ENCODE measurements at regions of chr4 and their contacts with region 1.

Region 1: GRCh38 chr4:80313627-80314026 is 21.9 kb upstream of the CFAP299 start:
- DNase-seq: no peak
- ATAC-seq: no peak
- H3K4me3 ChIP-seq: no peak overlapping the region
- H3K27ac ChIP-seq: no peak overlapping the region
- H3K4me1 ChIP-seq: no peaks in the 10 kb centered on the region
- H3K27me3 ChIP-seq: peaks cover 0 to 13% (median 0%) of the 10 kb centered on the region in 7 donors
- CTCF ChIP-seq: no peak

Region 2: GRCh38 chr4:79513576-79513975 is 800.1 kb before region 1 on chr4:
- intact Hi-C with region 1: no loop called
- DNase-seq: no peak
- ATAC-seq: no peak
- H3K4me3 ChIP-seq: no peak overlapping the region
- H3K27ac ChIP-seq: no peak overlapping the region
- H3K4me1 ChIP-seq: peaks cover 0 to 13% (median 4%) of the 10 kb centered on the region in 9 donors
- H3K27me3 ChIP-seq: no peaks in the 10 kb centered on the region
- CTCF ChIP-seq: no peak

Region 3: DNA sequence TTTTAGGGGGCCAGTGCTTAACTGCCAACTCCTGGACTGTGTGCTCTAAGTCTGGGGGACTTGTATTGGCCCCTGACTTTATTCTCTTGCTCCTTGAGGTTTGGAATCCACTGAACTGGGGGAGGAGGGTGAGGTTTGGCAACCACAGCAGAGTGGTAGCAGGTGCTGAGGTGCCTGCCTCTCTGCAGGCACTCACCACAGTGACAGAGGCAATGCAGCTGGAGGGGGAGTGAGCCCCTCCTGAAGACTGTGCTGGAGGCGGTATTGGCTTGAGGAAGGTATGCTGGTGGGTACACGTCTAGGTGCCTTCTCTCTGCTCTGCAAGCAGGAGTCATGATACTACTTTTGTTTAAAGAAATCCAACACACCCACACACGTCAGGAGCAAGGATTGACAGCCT is 46.5 kb after region 1 on chr4:
- intact Hi-C with region 1: loop called in 1 of 10 experiments (anchors 1 kb)
- DNase-seq: no peak
- ATAC-seq: no peak
- H3K4me3 ChIP-seq: no peak overlapping the region
- H3K27ac ChIP-seq: no peak overlapping the region
- H3K4me1 ChIP-seq: no peaks in the 10 kb centered on the region
- H3K27me3 ChIP-seq: peaks cover 0 to 31% (median 13%) of the 10 kb centered on the region in 7 donors
- CTCF ChIP-seq: no peak

Measured in heart right ventricle (tissue), 16 donors.